ENCODE measurements at regions of chr5 and their contacts with region 1.

Region 1: DNA sequence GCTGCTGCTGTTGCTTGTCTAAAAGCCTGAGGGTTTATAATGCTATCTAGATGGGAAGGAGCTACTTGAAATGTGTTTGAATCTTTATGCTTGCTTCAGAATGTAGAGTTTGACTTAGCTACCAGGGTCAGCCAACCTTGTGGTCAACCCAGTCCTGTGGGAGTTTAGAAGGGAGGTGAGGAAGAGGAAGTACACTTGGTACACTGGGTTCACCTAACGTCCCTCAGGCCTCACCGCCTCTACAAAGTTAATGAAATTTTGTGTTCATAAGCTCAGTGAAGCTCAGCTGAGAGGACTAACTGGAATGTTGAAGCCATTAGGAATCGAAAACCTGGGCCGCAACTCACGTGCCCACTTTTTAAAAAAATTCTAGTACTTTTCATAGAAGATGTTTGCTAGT is 10.7 kb downstream of the IQGAP2 start:
- DNase-seq: no peak
- ATAC-seq: no peak
- H3K4me3 ChIP-seq: no peak overlapping the region
- H3K4me3 Mint-ChIP-seq: no peak overlapping the region
- H3K27ac ChIP-seq: no peak overlapping the region
- H3K27ac Mint-ChIP-seq: peak overlapping the region; percentile 82 to 98
- H3K4me1 ChIP-seq: peaks cover 37% of the 10 kb centered on the region
- H3K4me1 Mint-ChIP-seq: peaks cover 86 to 90% of the 10 kb centered on the region in 2 donors
- H3K27me3 ChIP-seq: no peaks in the 10 kb centered on the region
- H3K27me3 Mint-ChIP-seq: no peaks in the 10 kb centered on the region
- CTCF ChIP-seq: no peak

Region 2: GRCh38 chr5:75818661-75819060 is 595.1 kb before region 1 on chr5:
- intact Hi-C with region 1: no loop called
- DNase-seq: no peak
- ATAC-seq: no peak
- H3K4me3 ChIP-seq: no peak overlapping the region
- H3K4me3 Mint-ChIP-seq: no peak overlapping the region
- H3K27ac ChIP-seq: no peak overlapping the region
- H3K27ac Mint-ChIP-seq: no peak overlapping the region
- H3K4me1 ChIP-seq: no peaks in the 10 kb centered on the region
- H3K4me1 Mint-ChIP-seq: no peaks in the 10 kb centered on the region
- H3K27me3 ChIP-seq: no peaks in the 10 kb centered on the region
- H3K27me3 Mint-ChIP-seq: peaks cover 13 to 49% of the 10 kb centered on the region in 2 donors
- CTCF ChIP-seq: no peak

Region 3: GRCh38 chr5:76225336-76225735 is 188.4 kb before region 1 on chr5:
- intact Hi-C with region 1: no loop called
- DNase-seq: no peak
- ATAC-seq: peak in 2 of 3 donors; percentile 37 to 71
- H3K4me3 ChIP-seq: no peak overlapping the region
- H3K4me3 Mint-ChIP-seq: no peak overlapping the region
- H3K27ac ChIP-seq: no peak overlapping the region
- H3K27ac Mint-ChIP-seq: no peak overlapping the region
- H3K4me1 ChIP-seq: peaks cover 2% of the 10 kb centered on the region
- H3K4me1 Mint-ChIP-seq: no peaks in the 10 kb centered on the region
- H3K27me3 ChIP-seq: no peaks in the 10 kb centered on the region
- H3K27me3 Mint-ChIP-seq: peaks cover 0 to 10% of the 10 kb centered on the region in 2 donors
- CTCF ChIP-seq: no peak

Region 4: GRCh38 chr5:76457674-76458485 is 44.1 kb after region 1 on chr5:
- intact Hi-C with region 1: loop called (anchors 5 kb)
- DNase-seq: no peak
- ATAC-seq: peak; percentile 47 to 86 (median 70)
- H3K4me3 ChIP-seq: no peak overlapping the region
- H3K4me3 Mint-ChIP-seq: peak overlapping the region; percentile 37
- H3K27ac ChIP-seq: peak overlapping the region; percentile 4
- H3K27ac Mint-ChIP-seq: peak overlapping the region; percentile 86 to 88
- H3K4me1 ChIP-seq: peaks cover 15% of the 10 kb centered on the region
- H3K4me1 Mint-ChIP-seq: peaks cover 74 to 78% of the 10 kb centered on the region in 2 donors
- H3K27me3 ChIP-seq: no peaks in the 10 kb centered on the region
- H3K27me3 Mint-ChIP-seq: no peaks in the 10 kb centered on the region
- CTCF ChIP-seq: no peak

Region 5: DNA sequence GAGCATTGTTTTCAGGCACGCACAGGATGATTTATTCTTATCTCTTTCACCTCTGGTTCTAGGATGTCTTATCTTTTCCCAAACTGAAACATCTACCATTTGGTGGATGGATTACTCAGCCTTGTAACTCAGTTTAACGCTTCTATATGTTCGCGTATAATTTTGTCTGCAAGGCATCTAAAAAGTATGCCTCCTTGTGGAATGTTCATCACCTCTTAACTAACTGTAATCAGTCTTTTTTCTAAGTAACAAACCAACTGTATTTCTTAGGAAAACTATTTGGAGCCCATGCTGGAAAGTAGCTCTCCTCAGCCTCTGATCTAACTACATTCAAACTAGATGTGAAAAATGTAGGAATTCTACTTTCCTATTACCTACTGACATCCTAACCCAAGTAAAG is 220.9 kb after region 1 on chr5:
- intact Hi-C with region 1: no loop called
- DNase-seq: no peak
- ATAC-seq: no peak
- H3K4me3 ChIP-seq: no peak overlapping the region
- H3K4me3 Mint-ChIP-seq: no peak overlapping the region
- H3K27ac ChIP-seq: no peak overlapping the region
- H3K27ac Mint-ChIP-seq: peak overlapping the region; percentile 23 to 52
- H3K4me1 ChIP-seq: peaks cover 5% of the 10 kb centered on the region
- H3K4me1 Mint-ChIP-seq: peaks cover 28 to 48% of the 10 kb centered on the region in 2 donors
- H3K27me3 ChIP-seq: no peaks in the 10 kb centered on the region
- H3K27me3 Mint-ChIP-seq: no peaks in the 10 kb centered on the region
- CTCF ChIP-seq: no peak

Region 6: GRCh38 chr5:76660360-76660759 is 246.6 kb after region 1 on chr5:
- intact Hi-C with region 1: no loop called
- DNase-seq: no peak
- ATAC-seq: no peak
- H3K4me3 ChIP-seq: no peak overlapping the region
- H3K4me3 Mint-ChIP-seq: no peak overlapping the region
- H3K27ac ChIP-seq: no peak overlapping the region
- H3K27ac Mint-ChIP-seq: peak overlapping the region in 1 of 2 donors; percentile 68
- H3K4me1 ChIP-seq: no peaks in the 10 kb centered on the region
- H3K4me1 Mint-ChIP-seq: peaks cover 11 to 18% of the 10 kb centered on the region in 2 donors
- H3K27me3 ChIP-seq: no peaks in the 10 kb centered on the region
- H3K27me3 Mint-ChIP-seq: no peaks in the 10 kb centered on the region
- CTCF ChIP-seq: no peak